ENCODE measurements at regions of chr5 and their contacts with region 1.

Region 1: DNA sequence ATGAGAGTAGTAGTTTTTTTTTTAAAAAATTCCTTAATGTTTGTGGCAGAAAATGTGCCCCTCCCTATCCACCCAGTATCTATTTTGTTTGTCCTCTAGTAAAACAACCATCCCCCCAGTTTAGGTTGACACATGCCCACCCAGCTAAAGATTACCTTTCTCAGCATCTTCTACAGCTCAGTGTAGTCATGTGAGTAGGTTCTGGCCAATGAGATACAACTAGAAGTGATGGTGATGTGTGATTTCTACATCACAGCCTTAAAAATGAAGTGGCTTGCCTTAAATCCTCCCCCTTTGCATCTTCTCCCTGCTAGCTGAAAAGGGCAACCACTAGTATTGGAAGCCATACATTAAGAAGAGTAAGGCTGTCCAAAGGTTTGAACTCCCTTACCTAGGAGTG is 14.9 kb downstream of the CHD1 start:
- DNase-seq: no peak
- CTCF ChIP-seq: no peak

Region 2: GRCh38 chr5:98927242-98927988 is 13.5 kb after region 1 on chr5:
- CTCF ChIA-PET with region 1: interaction called, 10 read pairs
- POLR2A ChIA-PET with region 1: interaction called, 5 read pairs
- DNase-seq: peak; percentile 61
- CTCF ChIP-seq: no peak